ENCODE measurements at regions of chr12 and their contacts with region 1.

Region 1: DNA sequence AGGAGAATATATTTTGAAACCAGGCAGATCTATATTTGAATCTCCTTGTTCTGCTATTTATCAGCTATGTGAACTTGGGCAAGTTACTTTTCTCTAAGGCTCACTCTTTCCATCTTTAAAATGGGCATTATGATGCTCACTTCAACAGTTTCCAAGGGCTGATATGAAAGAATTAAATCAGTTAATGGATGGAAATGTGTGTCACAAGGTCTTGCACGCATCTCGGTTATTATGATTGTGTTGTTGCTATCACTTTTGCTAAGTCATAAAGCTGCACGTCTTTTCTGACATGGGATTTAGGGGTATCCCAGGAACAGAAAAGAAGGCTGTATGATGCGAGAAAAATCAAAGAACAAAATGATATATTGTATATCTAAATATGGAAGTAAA is 721.5 kb upstream of the TBX3 start:
- DNase-seq: no peak
- H3K4me3 Mint-ChIP-seq: no peak overlapping the region
- H3K27ac Mint-ChIP-seq: no peak overlapping the region
- H3K4me1 Mint-ChIP-seq: no peaks in the 10 kb centered on the region
- H3K27me3 Mint-ChIP-seq: no peaks in the 10 kb centered on the region

Region 2: DNA sequence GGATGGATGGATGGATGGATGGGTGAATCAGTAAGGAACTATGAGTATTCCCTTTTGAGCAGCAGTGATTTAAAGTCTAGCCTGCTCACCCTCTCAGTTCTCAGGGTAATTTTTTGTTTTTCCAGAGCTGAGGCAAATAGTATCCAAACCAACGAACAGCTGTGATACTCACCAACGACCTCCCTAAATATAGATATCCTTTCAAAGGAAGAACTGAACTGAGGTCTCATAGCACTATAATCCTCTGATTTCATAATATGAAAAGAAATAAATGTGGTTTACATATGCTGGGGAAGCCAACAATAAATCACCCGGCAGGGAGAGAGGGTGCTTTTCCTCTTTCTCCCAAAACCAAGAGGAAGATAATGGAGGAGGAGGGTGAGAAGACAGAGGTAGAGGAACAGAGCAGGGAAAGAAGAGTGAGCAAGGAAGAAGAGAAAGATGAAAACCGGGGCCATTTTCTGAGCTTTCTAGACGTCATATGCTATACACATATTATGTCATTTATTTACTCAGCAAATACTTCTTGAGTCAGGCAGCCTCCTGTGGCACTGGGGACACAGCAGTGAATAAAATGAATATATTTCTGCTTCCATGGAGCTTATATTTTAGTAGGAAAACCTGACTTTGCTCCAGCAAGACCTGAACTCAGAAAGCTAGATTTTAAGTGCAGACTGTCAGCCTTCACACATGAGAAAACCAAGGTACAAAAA is 10.8 kb before region 1 on chr12:
- CTCF ChIA-PET with region 1: no interaction called
- POLR2A ChIA-PET with region 1: no interaction called
- DNase-seq: no peak
- H3K4me3 Mint-ChIP-seq: no peak overlapping the region
- H3K27ac Mint-ChIP-seq: no peak overlapping the region
- H3K4me1 Mint-ChIP-seq: no peaks in the 10 kb centered on the region
- H3K27me3 Mint-ChIP-seq: no peaks in the 10 kb centered on the region

Region 3: DNA sequence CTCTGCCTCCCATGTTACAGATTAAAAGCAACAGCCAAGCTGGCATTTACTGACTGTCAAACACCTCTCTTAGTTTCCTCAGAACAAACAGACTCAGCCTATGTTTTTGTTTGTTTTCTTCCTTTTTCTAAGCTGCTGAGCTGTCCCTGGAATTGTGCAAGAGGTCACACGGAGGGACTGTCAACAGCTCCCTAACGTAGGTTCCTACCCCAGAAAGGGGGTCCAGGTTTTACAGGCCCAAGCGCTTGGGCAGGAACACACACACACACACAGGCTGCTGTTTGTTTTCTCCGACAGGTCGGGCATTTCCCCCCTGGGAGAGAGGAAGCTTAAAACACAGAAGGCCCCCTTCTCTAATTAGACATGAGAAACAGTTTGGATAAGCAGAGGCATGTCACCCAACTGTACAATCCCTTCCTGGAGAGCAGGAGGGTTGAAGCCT is 18.1 kb after region 1 on chr12:
- CTCF ChIA-PET with region 1: no interaction called
- POLR2A ChIA-PET with region 1: interaction called, 11 read pairs
- DNase-seq: no peak
- H3K4me3 Mint-ChIP-seq: no peak overlapping the region
- H3K27ac Mint-ChIP-seq: no peak overlapping the region
- H3K4me1 Mint-ChIP-seq: no peaks in the 10 kb centered on the region
- H3K27me3 Mint-ChIP-seq: no peaks in the 10 kb centered on the region